ENCODE measurements at regions of chr9 and their contacts with region 1.

Region 1: DNA sequence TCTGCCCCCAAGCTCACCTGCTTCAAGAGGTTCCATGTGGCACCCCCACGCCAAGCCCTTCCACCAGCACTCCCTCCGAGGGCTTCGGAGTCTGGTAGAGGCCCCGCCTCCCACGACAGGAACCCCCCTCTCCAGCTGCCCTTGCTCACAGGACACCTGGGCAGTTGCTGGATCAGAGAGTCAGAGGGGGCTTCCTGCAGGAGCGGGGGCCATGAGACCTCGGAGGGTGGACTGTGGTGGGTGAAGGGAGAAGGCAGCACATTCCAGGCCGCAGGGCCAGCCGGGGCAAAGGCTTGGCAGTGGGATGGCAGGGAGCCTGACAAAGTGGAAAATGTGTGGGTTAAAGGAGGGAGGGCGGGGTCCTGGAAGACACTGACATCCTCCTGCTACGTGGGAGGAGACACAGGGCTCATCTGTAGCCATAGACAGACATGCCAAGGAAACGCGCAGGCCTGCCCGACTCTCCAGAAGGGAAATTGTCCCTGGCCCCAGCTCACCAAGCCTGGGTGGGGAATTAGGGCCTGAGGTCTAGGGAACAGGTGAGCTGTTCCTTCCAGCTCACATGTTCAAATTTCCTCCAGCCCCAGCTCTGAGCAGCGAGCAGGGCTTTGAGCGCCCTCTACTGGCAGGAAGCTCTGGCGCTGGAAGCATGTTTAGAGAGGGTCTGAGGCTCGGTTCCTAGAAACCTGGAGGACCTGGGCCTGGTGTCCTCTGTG is 74.2 kb downstream of the NTNG2 start:
- DNase-seq: peak; percentile 79
- H3K4me3 ChIP-seq: no peak overlapping the region
- H3K27ac ChIP-seq: no peak overlapping the region
- H3K4me1 ChIP-seq: peaks cover 31% of the 10 kb centered on the region
- H3K27me3 ChIP-seq: no peaks in the 10 kb centered on the region
- CTCF ChIP-seq: peak; percentile 98

Region 2: DNA sequence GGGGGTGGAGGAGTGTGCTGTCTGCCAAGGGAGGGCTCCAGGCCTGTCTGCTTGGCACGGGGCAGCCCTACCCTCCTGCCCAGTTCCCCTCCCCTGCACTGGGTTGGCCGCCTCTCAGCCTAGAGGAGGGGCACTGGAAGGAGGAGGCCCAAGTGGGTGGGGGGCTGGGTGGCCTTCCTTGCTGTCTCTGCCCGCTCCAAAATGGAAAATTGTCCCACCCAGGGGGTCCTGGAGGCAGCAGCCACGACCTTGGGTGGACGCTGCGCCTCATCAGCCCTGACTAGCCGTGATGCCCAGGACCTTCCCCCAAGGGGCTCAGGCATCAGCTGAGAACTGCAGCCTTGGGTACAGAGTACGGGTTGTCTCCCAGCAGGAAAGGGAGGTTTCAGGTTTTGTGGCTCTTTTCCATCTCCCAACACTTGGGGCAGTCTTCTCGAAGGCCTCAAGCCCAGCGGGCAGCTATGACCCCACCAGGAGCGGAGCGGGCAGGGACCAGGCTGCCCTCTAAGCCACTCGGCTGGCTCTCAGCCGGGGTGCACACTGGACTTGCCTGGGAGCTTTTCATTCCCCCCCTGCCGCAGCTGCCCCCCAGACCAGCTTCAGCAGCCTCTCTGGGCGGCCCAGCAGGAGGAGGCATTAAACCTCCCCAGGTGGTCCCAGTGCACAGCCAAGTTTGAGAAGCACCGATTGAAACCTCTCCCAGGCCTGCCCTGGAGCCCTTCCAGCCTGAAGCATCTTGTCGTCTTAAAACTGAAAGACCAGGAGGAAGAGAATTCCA is 53.6 kb before region 1 on chr9:
- CTCF ChIA-PET with region 1: interaction called, 5 read pairs
- POLR2A ChIA-PET with region 1: no interaction called
- intact Hi-C with region 1: loop called (anchors 5 kb)
- DNase-seq: peak; percentile 71
- H3K4me3 ChIP-seq: peak overlapping the region; percentile 3
- H3K27ac ChIP-seq: peak overlapping the region; percentile 50
- H3K4me1 ChIP-seq: peaks cover 54% of the 10 kb centered on the region
- H3K27me3 ChIP-seq: no peaks in the 10 kb centered on the region
- CTCF ChIP-seq: peak; percentile 52

Region 3: DNA sequence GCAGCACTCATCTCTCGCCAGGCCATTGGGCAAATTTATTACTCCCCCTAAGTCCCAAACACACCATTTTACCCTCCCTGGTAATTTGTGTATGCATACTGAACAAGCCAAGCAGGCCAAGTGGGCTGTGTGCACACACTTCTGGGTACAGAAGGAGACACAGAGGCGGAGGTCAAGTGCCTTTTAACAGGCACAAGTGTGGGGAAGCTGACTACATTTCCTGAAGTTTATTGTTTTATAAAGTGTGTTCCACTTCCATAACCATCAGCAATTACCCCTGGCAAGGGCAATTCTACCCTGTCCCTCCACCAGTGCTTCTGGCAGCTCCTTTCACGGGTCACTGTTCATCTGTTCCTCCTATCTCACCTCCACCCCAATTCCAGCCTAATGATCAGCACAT is 24.7 kb after region 1 on chr9:
- CTCF ChIA-PET with region 1: interaction called, 12 read pairs
- POLR2A ChIA-PET with region 1: no interaction called
- intact Hi-C with region 1: no loop called
- DNase-seq: no peak
- H3K4me3 ChIP-seq: no peak overlapping the region
- H3K27ac ChIP-seq: no peak overlapping the region
- H3K4me1 ChIP-seq: peaks cover 4% of the 10 kb centered on the region
- H3K27me3 ChIP-seq: no peaks in the 10 kb centered on the region
- CTCF ChIP-seq: no peak

Measured in A673 (cell line).